Calu3 (cell line): ENCODE measurements at regions of chr3 and their contacts with region 1.

Region 1: DNA sequence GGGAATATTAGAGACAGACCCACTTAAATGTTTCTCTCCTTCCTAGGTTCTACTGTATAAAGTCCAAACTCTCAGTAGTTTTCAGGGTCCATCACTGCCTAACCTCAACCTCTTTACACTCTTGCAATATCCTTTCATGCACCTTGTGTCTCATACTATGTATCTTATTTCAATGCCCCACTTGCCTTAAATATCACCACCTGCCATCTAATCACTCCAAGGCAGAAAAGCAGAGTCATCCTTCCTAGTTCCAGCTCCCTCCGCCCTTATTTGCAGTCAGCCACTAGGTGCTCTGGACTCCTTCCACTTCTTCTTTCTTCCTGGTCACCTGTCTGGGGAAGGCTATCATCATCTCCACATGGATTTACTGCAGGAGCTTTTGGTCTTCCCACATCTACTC is 322.0 kb downstream of the MFSD1 start:
- DNase-seq: no peak
- H3K4me3 Mint-ChIP-seq: no peak overlapping the region
- H3K27ac Mint-ChIP-seq: no peak overlapping the region
- H3K4me1 Mint-ChIP-seq: peaks cover 28% of the 10 kb centered on the region
- H3K27me3 Mint-ChIP-seq: no peaks in the 10 kb centered on the region
- CTCF ChIP-seq: no peak

Region 2: GRCh38 chr3:159301961-159302360 is 178.1 kb after region 1 on chr3:
- CTCF ChIA-PET with region 1: no interaction called
- intact Hi-C with region 1: loop called (anchors 5 kb)
- DNase-seq: no peak
- H3K4me3 Mint-ChIP-seq: no peak overlapping the region
- H3K27ac Mint-ChIP-seq: no peak overlapping the region
- H3K4me1 Mint-ChIP-seq: peaks cover 13% of the 10 kb centered on the region
- H3K27me3 Mint-ChIP-seq: no peaks in the 10 kb centered on the region
- CTCF ChIP-seq: no peak